ENCODE measurements at regions of chr18 and their contacts with region 1.

Region 1: GRCh38 chr18:49510393-49511115 is 23.5 kb upstream of the C18orf32 start:
- DNase-seq: peak; percentile 84
- H3K4me3 Mint-ChIP-seq: no peak overlapping the region
- H3K27ac Mint-ChIP-seq: no peak overlapping the region
- H3K4me1 Mint-ChIP-seq: no peaks in the 10 kb centered on the region
- H3K27me3 Mint-ChIP-seq: peaks cover 15% of the 10 kb centered on the region

Region 2: DNA sequence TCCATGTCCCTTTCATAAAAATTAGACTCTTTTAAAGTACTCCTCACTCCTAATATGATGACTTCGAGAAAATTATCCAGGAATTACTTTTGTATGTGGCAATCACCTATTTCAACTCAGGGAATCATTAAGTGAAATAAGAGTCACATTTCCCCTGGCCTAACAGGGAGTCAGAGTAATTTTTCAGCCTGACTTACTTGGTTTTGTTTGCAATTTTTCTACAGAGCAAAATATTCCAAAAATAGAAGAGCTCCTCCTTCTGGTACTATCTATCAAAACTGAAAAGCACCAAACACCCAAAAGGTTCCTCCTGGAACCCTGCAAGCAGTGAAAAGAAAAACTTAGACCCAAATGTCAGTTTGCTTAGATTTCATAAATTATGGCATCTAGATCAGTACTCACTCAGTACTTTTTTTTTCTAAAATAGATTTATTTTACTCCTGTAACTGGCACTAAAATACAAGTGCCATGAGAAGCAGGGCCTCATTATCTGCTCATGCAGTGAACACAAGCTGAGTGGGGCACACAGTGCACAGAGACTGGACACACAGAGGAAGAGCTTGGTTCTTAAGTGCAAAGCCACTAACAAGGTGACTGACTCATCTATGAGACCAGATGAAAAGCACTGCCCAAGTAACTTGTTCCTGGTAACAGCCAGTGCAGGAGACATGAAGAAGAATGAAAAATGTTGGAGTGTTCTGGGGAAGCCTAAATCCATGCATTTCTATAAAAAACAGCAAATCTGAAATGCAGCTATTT is 274.1 kb after region 1 on chr18:
- intact Hi-C with region 1: loop called (anchors 10 kb)
- DNase-seq: no peak
- H3K4me3 Mint-ChIP-seq: no peak overlapping the region
- H3K27ac Mint-ChIP-seq: no peak overlapping the region
- H3K4me1 Mint-ChIP-seq: peaks cover 27% of the 10 kb centered on the region
- H3K27me3 Mint-ChIP-seq: no peaks in the 10 kb centered on the region

Measured in activated CD4-positive, alpha-beta T cell treated with anti-CD3 and anti-CD28 coated beads, Interleukin-2, amount 10 ng/mL, durations not matched to agents 24 days and 14 days (primary cell).